GM12878 (cell line): ENCODE measurements at regions of chr1 and their contacts with region 1.

Region 1: GRCh38 chr1:206803221-206803730 is 31.0 kb upstream of the IL10 start:
- DNase-seq: peak; percentile 98
- ATAC-seq: peak; percentile 97
- H3K4me3 ChIP-seq: no peak overlapping the region
- H3K27ac ChIP-seq: peak overlapping the region; percentile 55
- H3K4me1 ChIP-seq: peaks cover 20% of the 10 kb centered on the region
- H3K27me3 ChIP-seq: no peaks in the 10 kb centered on the region
- CTCF ChIP-seq: no peak
- EP300 ChIP-seq: peak; percentile 98 to 99
- POLR2A ChIP-seq: peak; percentile 26; the same call in 1 of the 2 replicates
- RAD21 ChIP-seq: peak; percentile 9; the same call in 1 of the 2 replicates

Region 2: DNA sequence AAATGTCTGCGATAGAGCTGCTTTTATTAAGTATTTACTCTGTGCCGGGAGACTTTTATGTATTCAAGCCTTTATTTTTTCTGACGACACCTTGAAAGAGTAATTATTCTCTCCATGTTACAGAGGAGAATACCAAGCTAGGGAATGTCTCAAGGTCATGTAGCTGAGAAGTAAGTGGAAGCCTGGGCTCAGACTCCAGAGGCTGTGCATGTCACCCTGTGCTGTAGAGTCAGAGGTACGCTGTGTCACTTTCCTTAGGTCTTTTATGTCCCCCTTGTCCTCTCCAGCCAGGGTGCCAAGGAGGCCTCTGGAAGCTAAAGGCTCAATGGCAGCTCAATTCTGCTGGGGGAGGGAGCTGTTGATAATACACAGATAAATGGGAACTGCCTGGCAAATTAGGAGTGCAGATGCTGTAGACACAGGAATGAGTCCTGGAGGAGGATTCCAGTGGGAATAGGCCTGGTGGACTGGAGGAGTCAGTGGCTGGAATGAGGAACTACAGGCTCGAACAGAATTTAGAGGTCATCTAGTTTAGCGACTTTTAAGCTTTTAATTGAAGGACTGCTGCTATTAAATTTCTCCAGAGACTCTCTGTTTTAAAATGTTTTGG is 42.0 kb before region 1 on chr1:
- CTCF ChIA-PET with region 1: interaction called, 299 read pairs
- POLR2A ChIA-PET with region 1: interaction called, 12 read pairs
- RAD21 ChIA-PET with region 1: interaction called, 225 read pairs
- SMC1A ChIA-PET with region 1: interaction called, 319 read pairs
- in situ Hi-C with region 1: no loop called
- intact Hi-C with region 1: no loop called
- DNase-seq: no peak
- ATAC-seq: no peak
- H3K4me3 ChIP-seq: no peak overlapping the region
- H3K27ac ChIP-seq: no peak overlapping the region
- H3K4me1 ChIP-seq: peaks cover 3% of the 10 kb centered on the region
- H3K27me3 ChIP-seq: no peaks in the 10 kb centered on the region
- CTCF ChIP-seq: no peak
- EP300 ChIP-seq: no peak
- POLR2A ChIP-seq: no peak
- RAD21 ChIP-seq: no peak

Region 3: GRCh38 chr1:206784471-206784903 is 18.8 kb before region 1 on chr1:
- CTCF ChIA-PET with region 1: interaction called, 25 read pairs
- POLR2A ChIA-PET with region 1: interaction called, 4 read pairs
- RAD21 ChIA-PET with region 1: interaction called, 30 read pairs
- SMC1A ChIA-PET with region 1: interaction called, 23 read pairs
- in situ Hi-C with region 1: no loop called
- intact Hi-C with region 1: loop called (anchors 1 kb)
- DNase-seq: no peak
- ATAC-seq: peak; percentile 81
- H3K4me3 ChIP-seq: peak overlapping the region; percentile 38; the same call in 1 of the 2 replicates
- H3K27ac ChIP-seq: peak overlapping the region; percentile 85
- H3K4me1 ChIP-seq: peaks cover 49% of the 10 kb centered on the region
- H3K27me3 ChIP-seq: no peaks in the 10 kb centered on the region
- CTCF ChIP-seq: no peak
- EP300 ChIP-seq: peak; percentile 69 to 89; a peak in 3 of 4 replicates
- POLR2A ChIP-seq: peak; percentile 55
- RAD21 ChIP-seq: peak; percentile 19; the same call in 1 of the 2 replicates

Region 4: DNA sequence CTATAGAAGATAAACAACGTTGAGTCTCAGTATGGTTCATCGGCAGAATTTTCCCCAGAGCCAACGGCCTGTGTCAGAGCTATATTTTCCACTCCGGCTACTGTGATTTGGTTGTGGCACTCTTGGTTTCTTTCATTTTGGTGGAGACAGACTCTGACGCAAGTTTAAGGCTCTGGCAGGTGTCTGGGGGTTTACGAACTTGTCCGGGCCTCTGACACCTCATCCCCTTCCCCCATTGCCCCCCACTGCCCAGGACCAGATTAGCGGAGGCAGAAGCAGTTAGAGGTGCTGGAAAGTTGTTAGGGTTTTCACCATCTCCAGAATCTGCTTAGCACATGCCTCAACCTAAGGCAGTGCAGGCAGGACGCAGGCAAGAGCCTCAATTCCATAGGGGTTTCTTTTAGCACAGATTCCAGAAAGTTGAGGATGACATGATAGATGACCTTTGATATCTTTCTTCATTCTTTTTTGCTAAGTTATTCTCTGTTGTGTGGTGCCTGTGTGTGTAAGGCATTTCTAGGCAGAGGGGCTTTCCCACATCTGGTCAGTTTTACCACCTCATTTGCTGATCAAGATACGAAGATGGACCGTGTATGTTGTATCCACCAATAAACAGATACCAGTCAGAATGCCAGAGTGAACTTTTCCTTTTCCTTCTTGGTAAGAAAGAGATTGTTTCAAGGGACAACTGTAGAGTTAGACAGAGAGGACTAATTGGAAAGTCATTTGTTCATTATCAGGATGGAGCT is 12.6 kb before region 1 on chr1:
- CTCF ChIA-PET with region 1: interaction called, 25 read pairs
- POLR2A ChIA-PET with region 1: interaction called, 7 read pairs
- RAD21 ChIA-PET with region 1: interaction called, 30 read pairs
- SMC1A ChIA-PET with region 1: interaction called, 26 read pairs
- in situ Hi-C with region 1: no loop called
- intact Hi-C with region 1: no loop called
- DNase-seq: no peak
- ATAC-seq: peak; percentile 69
- H3K4me3 ChIP-seq: no peak overlapping the region
- H3K27ac ChIP-seq: peak overlapping the region; percentile 60
- H3K4me1 ChIP-seq: peaks cover 64% of the 10 kb centered on the region
- H3K27me3 ChIP-seq: no peaks in the 10 kb centered on the region
- CTCF ChIP-seq: no peak
- EP300 ChIP-seq: peak; percentile 79 to 94; a peak in 2 of 4 replicates
- POLR2A ChIP-seq: no peak
- RAD21 ChIP-seq: no peak

Region 5: DNA sequence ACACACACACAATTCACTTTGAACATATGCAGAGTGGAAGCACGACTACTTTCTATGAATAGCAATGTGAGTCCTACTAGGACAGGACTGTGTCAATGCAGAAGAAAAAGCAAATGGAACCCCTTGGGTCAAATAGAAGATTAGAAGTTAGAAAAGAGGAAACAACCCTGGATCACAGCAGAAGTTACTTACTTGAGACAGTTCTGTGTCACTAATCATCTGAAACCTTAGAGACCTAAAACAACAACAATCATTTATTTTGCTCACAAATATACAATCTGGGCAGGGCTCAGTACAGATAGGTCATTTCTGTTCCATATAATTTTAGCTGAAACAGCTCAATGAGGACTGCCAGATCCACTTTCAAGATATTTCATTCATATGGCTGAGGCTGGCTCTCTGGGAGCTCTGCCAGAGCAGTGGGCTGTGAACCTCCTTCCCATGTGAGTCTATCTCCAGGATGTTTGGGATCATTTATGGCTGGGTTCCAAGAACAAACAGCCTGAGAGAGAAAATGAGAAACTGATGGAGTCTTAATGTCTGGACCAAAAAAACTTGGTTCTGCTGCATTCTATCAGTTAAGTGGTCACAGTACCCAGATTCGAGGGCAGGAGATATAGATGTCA is 11.6 kb after region 1 on chr1:
- CTCF ChIA-PET with region 1: interaction called, 30 read pairs
- POLR2A ChIA-PET with region 1: interaction called, 4 read pairs
- RAD21 ChIA-PET with region 1: interaction called, 3 read pairs
- SMC1A ChIA-PET with region 1: interaction called, 11 read pairs
- in situ Hi-C with region 1: no loop called
- intact Hi-C with region 1: no loop called
- DNase-seq: no peak
- ATAC-seq: peak; percentile 42
- H3K4me3 ChIP-seq: no peak overlapping the region
- H3K27ac ChIP-seq: no peak overlapping the region; the same call in 1 of the 2 replicates
- H3K4me1 ChIP-seq: peaks cover 27% of the 10 kb centered on the region
- H3K27me3 ChIP-seq: no peaks in the 10 kb centered on the region
- CTCF ChIP-seq: no peak
- EP300 ChIP-seq: no peak
- POLR2A ChIP-seq: no peak
- RAD21 ChIP-seq: no peak

Region 6: DNA sequence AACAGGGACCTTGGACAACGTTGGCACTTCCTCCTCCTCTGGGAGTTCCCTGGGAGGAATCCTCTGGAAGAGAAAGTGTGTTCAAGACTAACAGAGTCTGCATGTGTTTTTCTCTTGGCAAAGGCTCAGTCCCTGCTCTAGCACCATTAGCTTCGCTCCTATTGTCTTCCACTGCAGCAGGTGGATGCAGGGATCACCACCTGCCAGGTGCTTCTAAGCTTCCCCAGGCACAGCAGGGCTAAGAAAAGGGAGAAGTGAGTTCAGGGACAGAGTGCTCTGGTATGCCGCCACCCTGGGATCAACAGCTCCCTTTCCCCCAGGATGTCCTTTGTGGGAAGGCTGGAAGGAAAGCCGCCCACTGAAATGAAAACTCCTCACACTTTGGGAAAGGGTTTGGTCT is 18.2 kb after region 1 on chr1:
- CTCF ChIA-PET with region 1: interaction called, 17 read pairs
- POLR2A ChIA-PET with region 1: interaction called, 4 read pairs
- RAD21 ChIA-PET with region 1: interaction called, 3 read pairs
- SMC1A ChIA-PET with region 1: interaction called, 11 read pairs
- in situ Hi-C with region 1: no loop called
- intact Hi-C with region 1: no loop called
- DNase-seq: no peak
- ATAC-seq: no peak
- H3K4me3 ChIP-seq: no peak overlapping the region
- H3K27ac ChIP-seq: no peak overlapping the region
- H3K4me1 ChIP-seq: peaks cover 13% of the 10 kb centered on the region
- H3K27me3 ChIP-seq: no peaks in the 10 kb centered on the region
- CTCF ChIP-seq: no peak
- EP300 ChIP-seq: no peak
- POLR2A ChIP-seq: no peak
- RAD21 ChIP-seq: no peak

Region 7: GRCh38 chr1:206952171-206952570 is 148.9 kb after region 1 on chr1:
- CTCF ChIA-PET with region 1: no interaction called
- POLR2A ChIA-PET with region 1: no interaction called
- RAD21 ChIA-PET with region 1: no interaction called
- SMC1A ChIA-PET with region 1: no interaction called
- in situ Hi-C with region 1: no loop called
- intact Hi-C with region 1: no loop called
- DNase-seq: no peak
- ATAC-seq: peak; percentile 12; the same call in 1 of the 3 replicates
- H3K4me3 ChIP-seq: no peak overlapping the region
- H3K27ac ChIP-seq: no peak overlapping the region
- H3K4me1 ChIP-seq: peaks cover 58% of the 10 kb centered on the region
- H3K27me3 ChIP-seq: no peaks in the 10 kb centered on the region
- CTCF ChIP-seq: no peak
- EP300 ChIP-seq: no peak
- POLR2A ChIP-seq: no peak
- RAD21 ChIP-seq: no peak

Region 8: GRCh38 chr1:207284209-207284897 is 481.1 kb after region 1 on chr1:
- CTCF ChIA-PET with region 1: no interaction called
- POLR2A ChIA-PET with region 1: no interaction called
- RAD21 ChIA-PET with region 1: no interaction called
- SMC1A ChIA-PET with region 1: no interaction called
- in situ Hi-C with region 1: no loop called
- intact Hi-C with region 1: no loop called
- DNase-seq: no peak
- ATAC-seq: no peak
- H3K4me3 ChIP-seq: no peak overlapping the region
- H3K27ac ChIP-seq: no peak overlapping the region
- H3K4me1 ChIP-seq: no peaks in the 10 kb centered on the region
- H3K27me3 ChIP-seq: no peaks in the 10 kb centered on the region; a peak in 1 of 4 replicates
- CTCF ChIP-seq: no peak
- EP300 ChIP-seq: no peak
- POLR2A ChIP-seq: no peak
- RAD21 ChIP-seq: no peak